ENCODE measurements at regions of chr4 and their contacts with region 1.

Region 1: DNA sequence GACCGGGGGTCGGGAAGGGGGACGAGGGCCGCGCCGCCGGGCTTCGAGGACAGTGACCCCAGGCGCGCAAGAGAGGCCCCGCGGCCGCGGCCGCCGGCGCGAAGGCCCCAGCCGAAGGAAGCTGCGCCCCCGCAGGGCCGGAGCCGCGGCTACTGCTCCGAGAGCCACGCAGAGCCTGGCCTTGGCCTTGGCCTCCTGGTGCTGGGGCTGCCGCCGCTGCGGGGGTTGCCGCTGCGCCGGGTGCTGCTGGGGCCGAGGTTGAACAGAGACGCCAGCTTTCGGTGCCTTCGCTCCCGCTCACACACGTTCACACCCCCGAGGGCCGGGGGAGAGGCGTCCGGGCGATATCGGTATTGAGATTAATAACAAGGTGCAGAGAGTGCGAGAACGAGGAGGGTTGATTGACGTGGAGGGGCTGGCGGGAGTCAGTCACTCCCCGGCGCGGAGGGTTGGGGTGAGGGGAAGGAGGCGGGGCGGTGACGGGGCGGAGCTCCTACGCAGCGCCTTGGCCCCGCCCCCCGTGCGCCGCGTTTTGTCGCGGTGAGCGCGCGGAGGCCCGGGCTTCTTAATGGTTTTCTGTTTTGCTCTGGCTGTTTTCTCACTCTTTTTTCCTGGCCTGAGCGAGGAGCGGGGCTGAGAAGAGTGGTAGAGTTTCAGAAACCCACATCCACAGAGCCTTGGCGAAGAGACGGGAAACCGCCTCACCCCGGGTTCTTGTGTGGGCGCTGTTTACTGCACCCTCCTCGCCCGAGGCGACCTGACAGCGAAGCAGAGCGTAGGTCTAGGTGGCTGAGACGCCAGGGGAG is 878 bp upstream of the CNOT6L start:
- DNase-seq: peak; percentile 92
- ATAC-seq: peak; percentile 74
- H3K4me3 Mint-ChIP-seq: peak overlapping the region; percentile 95
- H3K27ac Mint-ChIP-seq: peak overlapping the region; percentile 96
- H3K4me1 Mint-ChIP-seq: peaks cover 57% of the 10 kb centered on the region
- H3K27me3 Mint-ChIP-seq: no peaks in the 10 kb centered on the region
- CTCF ChIP-seq: no peak

Region 2: GRCh38 chr4:77193511-77194102 is 626.4 kb before region 1 on chr4:
- CTCF ChIA-PET with region 1: no interaction called
- POLR2A ChIA-PET with region 1: interaction called, 3 read pairs
- intact Hi-C with region 1: loop called (anchors 1 kb)
- DNase-seq: peak; percentile 73
- ATAC-seq: peak; percentile 91
- H3K4me3 Mint-ChIP-seq: peak overlapping the region; percentile 85
- H3K27ac Mint-ChIP-seq: peak overlapping the region; percentile 97
- H3K4me1 Mint-ChIP-seq: peaks cover 55% of the 10 kb centered on the region
- H3K27me3 Mint-ChIP-seq: no peaks in the 10 kb centered on the region
- CTCF ChIP-seq: no peak

Region 3: GRCh38 chr4:77699731-77700210 is 120.3 kb before region 1 on chr4:
- CTCF ChIA-PET with region 1: no interaction called
- POLR2A ChIA-PET with region 1: no interaction called
- intact Hi-C with region 1: no loop called
- DNase-seq: no peak
- ATAC-seq: no peak
- H3K4me3 Mint-ChIP-seq: no peak overlapping the region
- H3K27ac Mint-ChIP-seq: no peak overlapping the region
- H3K4me1 Mint-ChIP-seq: no peaks in the 10 kb centered on the region
- H3K27me3 Mint-ChIP-seq: peaks cover under 1% of the 10 kb centered on the region
- CTCF ChIP-seq: no peak

Region 4: GRCh38 chr4:77782102-77782835 is 37.8 kb before region 1 on chr4:
- CTCF ChIA-PET with region 1: no interaction called
- POLR2A ChIA-PET with region 1: interaction called, 6 read pairs
- intact Hi-C with region 1: loop called (anchors 5 kb)
- DNase-seq: no peak
- ATAC-seq: no peak
- H3K4me3 Mint-ChIP-seq: no peak overlapping the region
- H3K27ac Mint-ChIP-seq: no peak overlapping the region
- H3K4me1 Mint-ChIP-seq: peaks cover 57% of the 10 kb centered on the region
- H3K27me3 Mint-ChIP-seq: no peaks in the 10 kb centered on the region
- CTCF ChIP-seq: no peak

Region 5: GRCh38 chr4:77800483-77801259 is 19.4 kb before region 1 on chr4:
- CTCF ChIA-PET with region 1: no interaction called
- POLR2A ChIA-PET with region 1: interaction called, 19 read pairs
- intact Hi-C with region 1: loop called (anchors 2 kb)
- DNase-seq: no peak
- ATAC-seq: no peak
- H3K4me3 Mint-ChIP-seq: peak overlapping the region; percentile 17
- H3K27ac Mint-ChIP-seq: peak overlapping the region; percentile 39
- H3K4me1 Mint-ChIP-seq: peaks cover 60% of the 10 kb centered on the region
- H3K27me3 Mint-ChIP-seq: no peaks in the 10 kb centered on the region
- CTCF ChIP-seq: no peak

Region 6: DNA sequence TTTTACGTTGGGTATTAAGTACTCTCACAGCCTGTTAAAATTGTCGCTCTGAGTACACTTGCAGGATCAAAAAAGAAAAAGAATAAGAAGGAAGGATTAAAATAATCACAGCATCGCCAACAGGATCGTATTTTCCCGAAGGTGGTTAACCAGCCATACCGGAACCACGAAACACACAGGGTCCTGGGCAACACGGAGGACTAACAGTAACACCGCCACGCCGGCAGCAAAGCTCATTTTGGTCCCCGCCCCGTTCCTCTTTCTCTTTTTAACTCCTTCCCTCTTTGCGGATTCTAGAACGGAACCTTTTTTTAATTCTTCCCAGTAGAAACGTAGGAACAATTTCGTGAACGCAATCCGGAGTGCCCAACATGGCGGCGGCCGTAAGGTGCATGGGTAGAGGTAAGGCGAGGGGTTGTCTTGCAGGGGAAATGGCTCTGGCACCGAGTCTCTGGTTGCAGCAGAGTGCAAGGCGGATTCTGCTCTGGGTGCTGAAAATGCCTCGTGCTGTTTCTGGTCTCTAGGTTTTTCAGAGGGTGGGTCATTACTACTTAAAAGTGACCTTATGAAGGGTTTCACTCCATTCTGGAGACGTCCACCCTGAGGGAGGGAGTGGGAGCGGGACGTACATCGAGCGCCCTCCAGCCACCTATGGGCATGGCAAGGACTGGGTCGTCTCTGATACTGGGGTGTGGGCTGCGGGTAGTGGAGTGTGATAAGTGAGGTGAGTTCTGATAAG is 42.6 kb after region 1 on chr4 and contains the start of gene MRPL1:
- CTCF ChIA-PET with region 1: interaction called, 27 read pairs
- POLR2A ChIA-PET with region 1: interaction called, 417 read pairs
- intact Hi-C with region 1: loop called (anchors 1 kb)
- DNase-seq: peak; percentile 72
- ATAC-seq: peak; percentile 86
- H3K4me3 Mint-ChIP-seq: peak within 1 kb of the TSS; percentile 97
- H3K27ac Mint-ChIP-seq: peak within 1 kb of the TSS; percentile 100
- H3K4me1 Mint-ChIP-seq: peaks cover 47% of the 10 kb centered on the region
- H3K27me3 Mint-ChIP-seq: no peaks in the 10 kb centered on the region
- CTCF ChIP-seq: no peak
- total RNA-seq, gene MRPL1: 31.7 and 38.3 TPM in 2 replicates

Measured in activated B cell treated with CpG ODN at 0.5 μM for 24 hours (primary cell).